ENCODE measurements at regions of chr2 and their contacts with region 1.

Region 1: GRCh38 chr2:216698895-216699294 is 3.5 kb upstream of the IGFBP5 start:
- DNase-seq: no peak
- ATAC-seq: peak; percentile 51 to 62 (median 60)
- H3K4me3 ChIP-seq: no peak overlapping the region
- H3K27ac ChIP-seq: peak overlapping the region; percentile 83
- H3K4me1 ChIP-seq: peaks cover 65% of the 10 kb centered on the region
- H3K27me3 ChIP-seq: no peaks in the 10 kb centered on the region
- CTCF ChIP-seq: peak; percentile 63

Region 2: GRCh38 chr2:216666461-216667233 is 32.2 kb before region 1 on chr2:
- intact Hi-C with region 1: no loop called
- DNase-seq: peak; percentile 52 to 77
- ATAC-seq: peak; percentile 70 to 84 (median 76)
- H3K4me3 ChIP-seq: no peak overlapping the region
- H3K27ac ChIP-seq: no peak overlapping the region
- H3K4me1 ChIP-seq: no peaks in the 10 kb centered on the region
- H3K27me3 ChIP-seq: no peaks in the 10 kb centered on the region
- CTCF ChIP-seq: peak; percentile 99

Region 3: GRCh38 chr2:216807857-216808272 is 109.0 kb after region 1 on chr2:
- intact Hi-C with region 1: loop called (anchors 1 to 5 kb)
- DNase-seq: peak; percentile 61 to 81
- ATAC-seq: peak; percentile 11 to 46 (median 44)
- H3K4me3 ChIP-seq: no peak overlapping the region
- H3K27ac ChIP-seq: peak overlapping the region; percentile 84
- H3K4me1 ChIP-seq: peaks cover 56% of the 10 kb centered on the region
- H3K27me3 ChIP-seq: no peaks in the 10 kb centered on the region
- CTCF ChIP-seq: no peak

Region 4: GRCh38 chr2:217166241-217166850 is 467.5 kb after region 1 on chr2:
- intact Hi-C with region 1: loop called (anchors 2 kb)
- DNase-seq: no peak
- ATAC-seq: peak; percentile 48 to 76 (median 69)
- H3K4me3 ChIP-seq: no peak overlapping the region
- H3K27ac ChIP-seq: no peak overlapping the region
- H3K4me1 ChIP-seq: peaks cover 19% of the 10 kb centered on the region
- H3K27me3 ChIP-seq: no peaks in the 10 kb centered on the region
- CTCF ChIP-seq: peak; percentile 70

Region 5: DNA sequence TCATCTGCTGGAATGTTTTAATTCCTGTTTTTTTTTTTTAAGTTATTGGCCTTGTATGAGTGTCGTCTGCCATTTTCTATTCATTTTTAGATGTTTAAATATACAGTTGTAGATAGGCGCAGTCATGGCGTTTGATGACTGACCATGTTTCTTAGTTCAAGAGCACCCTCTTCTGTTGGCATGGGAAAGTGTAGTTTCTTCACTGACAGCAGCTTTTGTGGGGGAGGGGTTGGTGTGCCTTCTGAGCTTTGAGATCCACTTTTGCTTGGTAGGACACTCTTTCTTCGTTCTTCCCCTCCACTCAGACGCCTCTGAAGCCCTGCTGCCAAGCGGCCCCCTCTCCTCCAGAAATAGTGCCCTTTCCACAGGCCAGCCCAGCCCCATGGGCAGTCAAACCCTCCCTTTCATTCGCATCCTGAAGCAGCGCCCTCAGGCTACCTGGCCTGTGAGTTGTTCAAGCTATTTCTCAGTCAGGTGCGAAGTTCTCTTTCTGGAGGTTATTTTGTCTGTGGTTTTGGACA is 811.9 kb after region 1 on chr2:
- intact Hi-C with region 1: loop called (anchors 2 to 5 kb)
- DNase-seq: peak in 1 of 2 donors; percentile 22
- ATAC-seq: peak; percentile 89 to 98 (median 94)
- H3K4me3 ChIP-seq: peak overlapping the region; percentile 30
- H3K27ac ChIP-seq: no peak overlapping the region
- H3K4me1 ChIP-seq: no peaks in the 10 kb centered on the region
- H3K27me3 ChIP-seq: no peaks in the 10 kb centered on the region
- CTCF ChIP-seq: peak; percentile 73

Measured in psoas muscle (tissue), 8 donors.